Endothelial cell of umbilical vein (primary cell): ENCODE measurements at regions of chr10 and their contacts with region 1.

Region 1: GRCh38 chr10:23438550-23439441 is at the start of gene OTUD1:
- DNase-seq: peak; percentile 91
- H3K4me3 ChIP-seq: peak within 1 kb of the TSS; percentile 39 to 82 (median 54)
- H3K27ac ChIP-seq: peak within 1 kb of the TSS; percentile 36
- H3K4me1 ChIP-seq: peaks cover 4% of the 10 kb centered on the region
- H3K27me3 ChIP-seq: no peaks in the 10 kb centered on the region
- CTCF ChIP-seq: peak in 1 of 2 donors; percentile 4
- POLR2A ChIP-seq: no peak
- total RNA-seq, gene OTUD1: 4.8 and 6.0 TPM in 2 replicates

Region 2: DNA sequence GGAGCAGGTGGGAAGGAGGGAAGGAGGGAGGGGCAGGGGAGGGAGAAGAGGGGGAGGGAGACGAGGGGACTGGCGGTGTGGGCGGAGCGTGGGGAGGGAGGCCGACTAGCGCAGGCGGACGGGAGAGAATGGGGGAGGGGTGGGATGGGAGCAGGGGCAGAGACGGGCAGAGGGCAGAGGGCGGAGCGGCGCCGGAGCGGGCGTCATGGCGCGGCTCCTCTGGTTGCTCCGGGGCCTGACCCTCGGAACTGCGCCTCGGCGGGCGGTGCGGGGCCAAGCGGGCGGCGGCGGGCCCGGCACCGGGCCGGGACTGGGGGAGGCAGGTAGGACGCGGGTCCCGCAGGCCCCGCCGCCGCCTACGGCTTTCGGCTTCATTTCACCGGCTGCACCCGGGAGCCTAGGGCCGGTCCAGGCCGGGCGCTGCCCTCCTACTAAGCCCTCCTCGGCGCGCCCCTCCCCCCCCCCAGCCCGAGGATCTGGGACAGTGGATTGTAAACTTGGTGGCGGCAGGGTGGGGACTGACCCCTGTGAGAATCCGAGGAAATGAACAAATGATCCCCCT is 343.3 kb before region 1 on chr10 and contains the start of gene MSRB2:
- CTCF ChIA-PET with region 1: no interaction called
- POLR2A ChIA-PET with region 1: no interaction called
- dilution Hi-C with region 1: no loop called
- intact Hi-C with region 1: loop called (anchors 2 kb)
- DNase-seq: peak; percentile 90
- H3K4me3 ChIP-seq: peak within 1 kb of the TSS; percentile 52 to 91 (median 84)
- H3K27ac ChIP-seq: peak within 1 kb of the TSS; percentile 25
- H3K4me1 ChIP-seq: peaks cover 18% of the 10 kb centered on the region
- H3K27me3 ChIP-seq: peaks cover 1 to 10% of the 10 kb centered on the region in 2 experiments
- CTCF ChIP-seq: no peak
- POLR2A ChIP-seq: peak; percentile 89
- total RNA-seq, gene MSRB2: 16.2 and 19.4 TPM in 2 replicates

Region 3: GRCh38 chr10:23448802-23449570 is 10.2 kb after region 1 on chr10:
- CTCF ChIA-PET with region 1: interaction called, 3 read pairs
- POLR2A ChIA-PET with region 1: no interaction called
- dilution Hi-C with region 1: no loop called
- intact Hi-C with region 1: loop called (anchors 1 kb)
- DNase-seq: peak; percentile 70
- H3K4me3 ChIP-seq: no peak overlapping the region
- H3K27ac ChIP-seq: no peak overlapping the region
- H3K4me1 ChIP-seq: peaks cover 9% of the 10 kb centered on the region
- H3K27me3 ChIP-seq: no peaks in the 10 kb centered on the region
- CTCF ChIP-seq: no peak
- POLR2A ChIP-seq: no peak

Region 4: GRCh38 chr10:23834070-23834469 is 395.3 kb after region 1 on chr10:
- CTCF ChIA-PET with region 1: no interaction called
- POLR2A ChIA-PET with region 1: no interaction called
- dilution Hi-C with region 1: no loop called
- intact Hi-C with region 1: no loop called
- DNase-seq: no peak
- H3K4me3 ChIP-seq: no peak overlapping the region
- H3K27ac ChIP-seq: no peak overlapping the region
- H3K4me1 ChIP-seq: no peaks in the 10 kb centered on the region
- H3K27me3 ChIP-seq: no peaks in the 10 kb centered on the region
- CTCF ChIP-seq: no peak
- POLR2A ChIP-seq: no peak